Activated B cell treated with CpG ODN at 0.5 μM for 24 hours (primary cell): ENCODE measurements at regions of chr2 and their contacts with region 1.

Region 1: GRCh38 chr2:225660262-225661131 is 261.0 kb downstream of the NYAP2 start:
- DNase-seq: peak; percentile 52
- ATAC-seq: peak; percentile 65
- H3K4me3 Mint-ChIP-seq: no peak overlapping the region
- H3K27ac Mint-ChIP-seq: no peak overlapping the region
- H3K4me1 Mint-ChIP-seq: peaks cover 2% of the 10 kb centered on the region
- H3K27me3 Mint-ChIP-seq: peaks cover 22% of the 10 kb centered on the region
- CTCF ChIP-seq: peak; percentile 91

Region 2: DNA sequence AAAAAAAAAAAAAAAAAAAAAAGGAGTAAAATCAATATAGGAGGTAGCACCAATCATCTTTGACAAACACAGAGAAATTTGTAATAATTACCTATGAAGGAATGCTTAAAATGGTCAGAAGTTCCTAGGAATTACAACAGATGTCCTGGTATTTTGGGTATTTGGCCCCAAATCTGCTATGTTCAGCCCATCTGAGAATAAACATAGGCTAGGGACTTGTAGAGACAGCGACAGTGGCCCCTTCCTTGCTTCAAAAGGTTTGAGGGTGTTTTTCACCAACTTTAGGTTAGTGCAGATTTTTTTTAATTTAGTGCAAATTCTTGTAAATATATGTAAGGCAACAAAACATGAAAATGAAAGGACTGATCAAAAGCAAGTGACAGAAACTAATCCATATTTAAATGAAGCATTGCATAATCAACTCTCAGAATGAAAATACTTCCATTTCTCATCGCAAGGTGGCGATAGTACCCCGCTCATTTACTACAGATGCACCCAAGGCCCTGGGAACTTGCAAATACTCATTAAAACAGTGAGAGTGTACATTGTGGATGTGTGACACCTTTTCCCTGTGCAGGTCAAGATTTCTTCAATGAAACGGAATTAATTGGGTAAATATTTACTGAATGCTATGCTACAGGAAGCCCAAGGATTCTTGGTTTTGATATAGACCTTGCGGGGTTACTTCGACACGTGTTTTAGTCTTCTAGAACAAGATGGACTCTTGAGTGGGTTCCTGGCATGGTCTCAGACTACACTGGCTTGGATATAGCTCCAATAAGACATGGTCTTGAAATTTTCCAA is 1303.2 kb before region 1 on chr2:
- CTCF ChIA-PET with region 1: no interaction called
- POLR2A ChIA-PET with region 1: no interaction called
- intact Hi-C with region 1: loop called (anchors 1 kb)
- DNase-seq: no peak
- ATAC-seq: peak; percentile 73
- H3K4me3 Mint-ChIP-seq: no peak overlapping the region
- H3K27ac Mint-ChIP-seq: no peak overlapping the region
- H3K4me1 Mint-ChIP-seq: no peaks in the 10 kb centered on the region
- H3K27me3 Mint-ChIP-seq: peaks cover 8% of the 10 kb centered on the region
- CTCF ChIP-seq: no peak

Region 3: DNA sequence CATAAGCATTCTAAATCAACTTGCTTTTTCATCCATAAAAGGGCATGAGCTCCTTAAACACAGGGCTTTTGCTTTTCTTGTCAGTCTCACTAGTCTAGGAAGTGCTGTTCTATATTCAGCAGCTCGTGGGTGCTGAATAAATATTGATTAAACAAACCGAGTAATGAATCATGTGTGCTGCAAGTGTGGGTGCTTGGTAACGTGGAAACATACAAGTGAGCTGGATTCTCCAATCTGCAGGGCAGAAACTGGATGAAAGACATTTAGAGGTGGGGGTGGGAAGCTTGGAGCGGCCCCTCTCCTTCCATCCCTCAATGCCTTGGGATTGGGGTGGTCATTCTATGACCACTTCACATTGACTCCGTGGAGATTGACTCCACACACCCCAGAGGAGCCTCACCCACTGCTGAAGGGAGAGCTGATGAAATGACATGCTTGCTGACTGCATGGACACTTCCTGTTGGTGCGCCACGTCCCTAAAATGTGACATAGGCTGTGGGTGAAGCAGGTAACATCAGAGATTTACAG is 732.8 kb before region 1 on chr2:
- CTCF ChIA-PET with region 1: interaction called, 3 read pairs
- POLR2A ChIA-PET with region 1: no interaction called
- intact Hi-C with region 1: loop called (anchors 1 kb)
- DNase-seq: no peak
- ATAC-seq: no peak
- H3K4me3 Mint-ChIP-seq: peak overlapping the region; percentile 11
- H3K27ac Mint-ChIP-seq: peak overlapping the region; percentile 78
- H3K4me1 Mint-ChIP-seq: peaks cover 98% of the 10 kb centered on the region
- H3K27me3 Mint-ChIP-seq: no peaks in the 10 kb centered on the region
- CTCF ChIP-seq: no peak

Region 4: GRCh38 chr2:225233233-225233632 is 427.3 kb before region 1 on chr2:
- CTCF ChIA-PET with region 1: no interaction called
- POLR2A ChIA-PET with region 1: no interaction called
- intact Hi-C with region 1: no loop called
- DNase-seq: no peak
- ATAC-seq: no peak
- H3K4me3 Mint-ChIP-seq: no peak overlapping the region
- H3K27ac Mint-ChIP-seq: no peak overlapping the region
- H3K4me1 Mint-ChIP-seq: no peaks in the 10 kb centered on the region
- H3K27me3 Mint-ChIP-seq: no peaks in the 10 kb centered on the region
- CTCF ChIP-seq: no peak

Region 5: DNA sequence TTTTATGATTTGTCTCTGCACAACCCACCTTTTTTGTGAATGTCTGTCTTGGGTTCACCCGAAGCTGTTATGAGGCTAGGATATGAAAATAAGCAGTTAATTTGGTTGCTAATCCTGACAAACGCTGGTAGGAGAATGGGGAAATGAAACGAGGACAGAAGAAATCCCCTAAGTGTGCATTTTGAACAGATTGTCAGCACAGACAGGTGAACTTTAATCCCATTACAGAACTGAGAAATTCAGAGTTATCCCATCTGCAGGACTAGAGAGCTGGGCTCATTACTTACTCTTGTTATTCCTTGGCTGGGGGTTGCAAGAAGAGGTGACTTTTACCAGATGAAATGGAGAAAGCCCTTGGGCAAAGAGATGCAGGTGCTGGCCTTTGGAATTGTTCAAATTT is 384.3 kb before region 1 on chr2:
- CTCF ChIA-PET with region 1: interaction called, 31 read pairs
- POLR2A ChIA-PET with region 1: no interaction called
- intact Hi-C with region 1: loop called (anchors 2 kb)
- DNase-seq: no peak
- ATAC-seq: peak; percentile 70
- H3K4me3 Mint-ChIP-seq: peak overlapping the region; percentile 3
- H3K27ac Mint-ChIP-seq: peak overlapping the region; percentile 27
- H3K4me1 Mint-ChIP-seq: peaks cover 29% of the 10 kb centered on the region
- H3K27me3 Mint-ChIP-seq: no peaks in the 10 kb centered on the region
- CTCF ChIP-seq: no peak

Region 6: GRCh38 chr2:225650041-225650440 is 10.5 kb before region 1 on chr2:
- CTCF ChIA-PET with region 1: interaction called, 12 read pairs
- POLR2A ChIA-PET with region 1: no interaction called
- intact Hi-C with region 1: no loop called
- DNase-seq: no peak
- ATAC-seq: no peak
- H3K4me3 Mint-ChIP-seq: no peak overlapping the region
- H3K27ac Mint-ChIP-seq: no peak overlapping the region
- H3K4me1 Mint-ChIP-seq: no peaks in the 10 kb centered on the region
- H3K27me3 Mint-ChIP-seq: peaks cover 8% of the 10 kb centered on the region
- CTCF ChIP-seq: no peak